ENCODE measurements at regions of chr16 and their contacts with region 1.

Region 1: DNA sequence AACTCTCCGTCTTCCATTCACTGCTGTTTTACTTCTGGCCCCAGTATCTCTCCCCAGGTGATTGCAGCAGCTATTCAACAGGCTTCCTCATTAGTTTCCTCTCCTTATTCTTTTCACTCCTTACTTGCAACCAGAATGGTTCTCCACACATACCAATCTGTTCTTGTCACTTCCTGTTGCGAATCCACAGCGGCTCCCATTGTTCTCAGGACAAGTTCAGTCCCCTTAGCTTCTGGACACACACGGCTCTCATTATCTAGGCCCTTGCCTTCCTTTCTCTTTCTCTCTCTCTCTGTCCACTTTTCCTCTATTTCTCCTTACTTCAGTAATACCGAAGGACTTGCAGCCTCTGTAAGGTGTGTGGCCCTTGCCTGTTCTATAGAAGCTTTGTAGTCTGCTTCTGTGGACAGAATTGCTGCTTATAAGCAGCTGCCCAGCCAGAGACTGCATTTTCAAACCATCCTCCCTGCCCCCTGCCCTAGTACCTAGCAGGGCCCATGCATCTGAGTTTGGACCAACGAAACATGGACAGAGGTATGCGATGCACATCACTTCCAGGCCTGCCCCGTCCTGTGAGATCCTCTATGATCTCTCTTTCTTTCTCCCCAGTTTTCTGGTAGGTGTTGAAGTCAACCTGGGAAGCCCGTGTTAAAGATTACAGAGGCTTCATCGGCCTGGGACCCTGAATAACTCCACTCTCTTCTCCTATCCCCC is 45.7 kb downstream of the VAT1L start:
- DNase-seq: peak; percentile 54
- H3K4me3 ChIP-seq: no peak overlapping the region
- H3K27ac ChIP-seq: peak overlapping the region; percentile 98
- H3K27me3 ChIP-seq: no peaks in the 10 kb centered on the region
- CTCF ChIP-seq: no peak

Region 2: DNA sequence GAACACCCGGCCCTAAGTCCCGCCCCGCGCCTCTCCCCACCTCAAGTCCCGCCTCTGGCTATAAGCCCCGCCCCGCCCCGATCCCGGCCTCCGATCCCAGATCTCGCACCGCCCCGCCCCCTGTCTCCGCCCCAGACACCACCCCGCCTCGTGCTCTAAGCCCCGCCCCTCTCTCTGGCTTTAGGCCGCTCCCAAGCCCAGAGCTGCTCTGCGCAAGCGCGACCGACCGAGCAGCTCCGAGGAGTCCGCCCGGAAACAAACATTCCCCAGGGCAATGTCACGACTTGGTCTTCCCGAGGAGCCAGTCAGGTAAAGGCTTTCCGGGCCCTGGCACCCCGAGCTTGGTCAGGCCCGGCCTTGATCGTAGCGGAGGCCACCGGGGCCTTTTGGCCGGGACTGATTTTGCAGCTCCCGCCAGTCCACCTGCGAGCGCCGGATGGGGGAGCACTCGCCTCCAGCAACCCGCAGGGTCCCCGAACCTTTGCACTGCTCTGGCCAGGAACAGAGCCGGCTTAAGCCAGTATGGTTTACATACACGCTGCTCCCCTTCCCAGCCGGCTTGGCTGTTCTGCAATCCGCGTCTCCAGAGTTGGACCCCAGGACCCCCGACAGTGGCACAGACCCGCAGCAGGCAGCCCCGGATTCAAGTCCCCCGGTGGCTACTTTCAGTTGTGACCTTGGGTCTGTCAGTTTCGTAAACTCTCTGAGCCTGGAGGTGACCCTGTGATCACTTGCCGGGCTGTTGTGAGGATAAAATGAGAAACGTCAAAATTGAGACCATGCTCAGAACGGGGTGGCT is 111.6 kb before region 1 on chr16 and contains the start of gene NUDT7:
- CTCF ChIA-PET with region 1: no interaction called
- POLR2A ChIA-PET with region 1: interaction called, 10 read pairs
- DNase-seq: peak; percentile 94
- H3K4me3 ChIP-seq: peak within 1 kb of the TSS; percentile 67
- H3K27ac ChIP-seq: peak within 1 kb of the TSS; percentile 88
- H3K27me3 ChIP-seq: no peaks in the 10 kb centered on the region
- CTCF ChIP-seq: peak; percentile 32
- polyA plus RNA-seq, gene NUDT7: 18.3 and 19.3 TPM in 2 replicates

Measured in AG04450 (cell line).